ENCODE measurements at regions of chr4 and their contacts with region 1.

Region 1: GRCh38 chr4:184282251-184282713 is 64.6 kb upstream of the ENPP6 start:
- DNase-seq: peak; percentile 80
- ATAC-seq: peak; percentile 63
- H3K4me3 ChIP-seq: peak overlapping the region; percentile 25
- H3K27ac ChIP-seq: peak overlapping the region; percentile 99
- H3K4me1 ChIP-seq: peaks cover 69% of the 10 kb centered on the region
- H3K27me3 ChIP-seq: no peaks in the 10 kb centered on the region
- CTCF ChIP-seq: peak; percentile 50 to 70 (median 61)
- EP300 ChIP-seq: peak in 1 of 2 experiments; percentile 58; a peak in 2 of 4 replicates
- POLR2A ChIP-seq: peak; percentile 62
- RAD21 ChIP-seq: peak; percentile 69

Region 2: GRCh38 chr4:184329659-184330400 is 47.5 kb after region 1 on chr4:
- CTCF ChIA-PET with region 1: interaction called, 31 read pairs
- POLR2A ChIA-PET with region 1: interaction called, 93 read pairs
- RAD21 ChIA-PET with region 1: interaction called, 119 read pairs
- SMC1A ChIA-PET with region 1: interaction called, 102 read pairs
- in situ Hi-C with region 1: no loop called
- intact Hi-C with region 1: no loop called
- DNase-seq: peak; percentile 90
- ATAC-seq: peak; percentile 81
- H3K4me3 ChIP-seq: no peak overlapping the region
- H3K27ac ChIP-seq: peak overlapping the region; percentile 90
- H3K4me1 ChIP-seq: peaks cover 44% of the 10 kb centered on the region
- H3K27me3 ChIP-seq: no peaks in the 10 kb centered on the region
- CTCF ChIP-seq: no peak; a peak in 2 of 6 replicates
- EP300 ChIP-seq: peak; percentile 98 to 100
- POLR2A ChIP-seq: peak; percentile 53; the same call in 1 of the 2 replicates
- RAD21 ChIP-seq: peak; percentile 28; the same call in 1 of the 2 replicates

Region 3: GRCh38 chr4:184384056-184384809 is 102.0 kb after region 1 on chr4:
- CTCF ChIA-PET with region 1: interaction called, 10 read pairs
- POLR2A ChIA-PET with region 1: interaction called, 12 read pairs
- RAD21 ChIA-PET with region 1: interaction called, 9 read pairs
- SMC1A ChIA-PET with region 1: interaction called, 8 read pairs
- in situ Hi-C with region 1: no loop called
- intact Hi-C with region 1: no loop called
- DNase-seq: peak; percentile 92
- ATAC-seq: peak; percentile 77
- H3K4me3 ChIP-seq: peak overlapping the region; percentile 59; the same call in 1 of the 2 replicates
- H3K27ac ChIP-seq: peak overlapping the region; percentile 88
- H3K4me1 ChIP-seq: peaks cover 68% of the 10 kb centered on the region
- H3K27me3 ChIP-seq: no peaks in the 10 kb centered on the region
- CTCF ChIP-seq: no peak
- EP300 ChIP-seq: peak; percentile 76 to 86
- POLR2A ChIP-seq: peak; percentile 70
- RAD21 ChIP-seq: no peak

Region 4: DNA sequence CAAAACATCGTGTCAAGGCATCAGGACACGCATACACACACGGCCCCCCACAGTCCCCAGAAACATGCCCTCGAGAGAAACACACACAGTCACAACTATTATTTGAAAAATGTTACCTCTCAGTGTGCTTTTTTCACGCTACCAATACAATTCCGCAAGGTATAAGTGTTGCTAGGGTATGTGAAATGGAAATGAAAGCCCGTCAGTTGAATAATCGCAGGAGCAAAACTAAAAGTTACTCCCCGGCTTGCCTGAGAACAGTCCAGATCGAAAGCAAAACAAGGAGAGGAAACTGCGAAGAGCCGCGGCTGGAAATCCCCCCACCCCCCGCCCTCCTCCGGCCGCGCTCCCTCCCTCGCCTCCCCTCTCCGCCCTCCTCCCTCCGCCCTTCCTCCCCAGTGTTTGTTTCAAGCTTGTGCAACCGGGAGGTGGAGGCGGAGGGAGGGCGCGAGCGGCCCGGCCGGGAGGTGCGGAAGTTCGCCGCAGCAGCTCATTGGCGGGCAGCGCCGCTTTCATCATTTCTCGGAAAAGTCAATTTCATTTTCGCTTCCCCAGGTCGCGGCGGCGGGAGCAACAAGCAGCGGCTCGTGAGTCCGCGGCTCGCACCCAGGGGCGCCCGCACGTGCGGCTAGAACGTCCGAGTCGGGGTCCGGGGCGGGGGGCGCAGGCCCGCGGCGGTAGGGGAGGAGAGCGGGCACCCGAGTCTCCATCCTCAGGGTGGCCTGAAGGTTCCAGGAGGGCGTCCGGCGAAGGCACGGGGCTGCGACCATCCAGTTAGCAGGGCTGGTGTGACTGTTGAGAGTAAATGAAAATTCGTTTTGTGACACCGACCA is 192.2 kb after region 1 on chr4 and contains the start of gene IRF2:
- CTCF ChIA-PET with region 1: interaction called, 4 read pairs
- POLR2A ChIA-PET with region 1: interaction called, 4 read pairs
- RAD21 ChIA-PET with region 1: interaction called, 5 read pairs
- SMC1A ChIA-PET with region 1: interaction called, 3 read pairs
- in situ Hi-C with region 1: no loop called
- intact Hi-C with region 1: loop called (anchors 1 kb)
- DNase-seq: peak; percentile 93
- ATAC-seq: peak; percentile 75
- H3K4me3 ChIP-seq: peak within 1 kb of the TSS; percentile 99
- H3K27ac ChIP-seq: peak within 1 kb of the TSS; percentile 92
- H3K4me1 ChIP-seq: peaks cover 14% of the 10 kb centered on the region
- H3K27me3 ChIP-seq: no peaks in the 10 kb centered on the region
- CTCF ChIP-seq: no peak
- EP300 ChIP-seq: peak; percentile 51; a peak in 3 of 4 replicates
- POLR2A ChIP-seq: peak; percentile 87
- RAD21 ChIP-seq: peak; percentile 47; the same call in 1 of the 2 replicates
- polyA plus RNA-seq, gene IRF2: 58.4 to 59.9 TPM

Region 5: DNA sequence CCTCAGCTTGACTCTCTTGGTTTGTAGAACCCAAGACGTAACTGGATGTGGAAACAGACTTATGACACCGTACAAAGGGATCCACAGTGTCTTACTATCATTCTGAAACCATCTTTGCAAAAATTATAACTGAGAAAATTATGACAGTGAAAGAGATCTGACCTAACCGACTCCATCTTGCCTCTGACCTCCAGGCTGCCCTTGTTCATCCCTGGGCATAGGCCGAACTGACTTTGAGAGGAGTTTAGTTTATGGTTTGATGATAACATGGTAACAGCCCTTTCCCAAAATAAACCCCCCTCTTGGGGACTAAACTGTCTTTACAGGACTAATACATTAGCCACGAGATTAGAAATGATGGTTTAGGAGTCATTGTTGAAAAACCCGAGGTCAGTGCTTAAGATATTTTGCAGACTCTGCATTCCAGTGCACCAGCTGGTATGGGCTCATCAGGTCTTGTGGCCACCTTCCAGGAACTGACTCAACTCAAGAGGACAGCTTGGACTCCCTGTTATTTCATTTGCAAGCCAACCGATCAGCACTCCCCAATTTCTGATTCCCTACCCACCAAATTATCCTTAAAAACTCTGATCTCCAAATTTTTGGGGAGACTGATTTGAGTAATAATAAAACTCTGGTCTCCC is 317.3 kb after region 1 on chr4:
- CTCF ChIA-PET with region 1: no interaction called
- POLR2A ChIA-PET with region 1: no interaction called
- RAD21 ChIA-PET with region 1: no interaction called
- SMC1A ChIA-PET with region 1: no interaction called
- in situ Hi-C with region 1: no loop called
- intact Hi-C with region 1: no loop called
- DNase-seq: no peak
- ATAC-seq: no peak
- H3K4me3 ChIP-seq: no peak overlapping the region
- H3K27ac ChIP-seq: no peak overlapping the region
- H3K4me1 ChIP-seq: no peaks in the 10 kb centered on the region
- H3K27me3 ChIP-seq: no peaks in the 10 kb centered on the region; a peak in 1 of 4 replicates
- CTCF ChIP-seq: no peak
- EP300 ChIP-seq: no peak
- POLR2A ChIP-seq: no peak
- RAD21 ChIP-seq: no peak

Region 6: DNA sequence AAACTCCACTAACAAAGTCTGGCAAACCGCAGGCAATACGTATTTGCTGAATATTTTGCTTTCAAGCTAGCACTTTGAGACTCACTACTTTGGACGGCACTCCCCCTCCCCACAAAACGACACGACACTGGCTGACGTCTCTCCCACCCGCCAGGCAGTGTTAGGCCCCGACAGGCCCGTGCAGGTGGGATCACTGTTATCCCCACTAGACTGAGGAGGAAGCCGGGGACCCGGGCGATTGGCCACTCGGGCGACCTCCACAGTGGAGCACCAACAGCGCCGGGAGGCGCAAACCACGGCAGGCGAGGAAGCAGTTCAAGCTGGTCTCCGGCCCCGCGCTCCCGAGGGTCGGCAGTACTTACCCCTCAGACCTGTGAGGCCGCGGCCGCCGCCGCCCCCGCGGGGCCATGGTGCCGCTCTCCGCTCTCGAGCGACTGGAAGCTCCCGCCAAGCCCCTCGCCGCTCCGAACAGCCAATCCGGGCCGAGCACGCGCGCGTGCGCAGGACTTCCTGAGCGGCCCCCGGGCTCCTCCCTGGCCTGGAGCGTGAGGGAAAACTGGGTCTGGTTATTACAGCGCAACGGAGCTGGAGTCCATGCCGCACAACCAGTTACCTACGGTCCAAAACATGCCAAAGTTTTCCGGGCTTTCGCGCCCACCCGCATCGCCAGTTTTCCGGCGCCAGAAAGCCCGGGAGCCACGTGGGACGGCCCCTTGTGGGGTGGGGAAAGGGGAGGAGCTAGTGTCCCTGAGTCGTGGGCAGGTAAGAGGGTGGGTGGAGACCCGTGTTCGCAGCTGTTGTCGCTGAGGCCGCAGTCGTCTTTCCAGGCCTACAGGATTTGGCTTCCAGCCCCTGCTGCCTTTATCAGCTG is 451.6 kb after region 1 on chr4 and contains the start of gene CENPU:
- CTCF ChIA-PET with region 1: no interaction called
- POLR2A ChIA-PET with region 1: no interaction called
- RAD21 ChIA-PET with region 1: interaction called, 3 read pairs
- SMC1A ChIA-PET with region 1: no interaction called
- in situ Hi-C with region 1: loop called (anchors 10 kb)
- intact Hi-C with region 1: no loop called
- DNase-seq: peak; percentile 94
- ATAC-seq: peak; percentile 93
- H3K4me3 ChIP-seq: peak within 1 kb of the TSS; percentile 91
- H3K27ac ChIP-seq: peak within 1 kb of the TSS; percentile 81
- H3K4me1 ChIP-seq: peaks cover 9% of the 10 kb centered on the region
- H3K27me3 ChIP-seq: no peaks in the 10 kb centered on the region
- CTCF ChIP-seq: no peak
- EP300 ChIP-seq: no peak
- POLR2A ChIP-seq: peak; percentile 91
- RAD21 ChIP-seq: 0 out of 2 replicates have a peak, but pooled peaks have one; percentile 22
- polyA plus RNA-seq, gene CENPU: 26.6 to 46.5 TPM